Spleen (tissue), 13 donors: ENCODE measurements at regions of chr10 and their contacts with region 1.

Region 1: GRCh38 chr10:22316285-22317120 is at the start of gene COMMD3:
- DNase-seq: peak; percentile 96
- H3K4me3 ChIP-seq: peak within 1 kb of the TSS; percentile 74 to 95 (median 83)
- H3K27ac ChIP-seq: peak within 1 kb of the TSS; percentile 76 to 96 (median 94)
- H3K4me1 ChIP-seq: peaks cover 21 to 52% (median 42%) of the 10 kb centered on the region in 6 donors
- H3K27me3 ChIP-seq: peaks cover 0 to 5% (median 0%) of the 10 kb centered on the region in 7 donors
- CTCF ChIP-seq: peak in 1 of 11 experiments; percentile 4
- POLR2A ChIP-seq: peak in 2 of 3 donors; percentile 39 to 64
- total RNA-seq, gene COMMD3: 43.5 to 63.7 (median 52.9) TPM

Region 2: GRCh38 chr10:22251751-22252223 is 64.7 kb before region 1 on chr10:
- intact Hi-C with region 1: loop called (anchors 10 kb)
- DNase-seq: peak; percentile 92
- H3K4me3 ChIP-seq: peak overlapping the region; percentile 63 to 95 (median 72)
- H3K27ac ChIP-seq: peak overlapping the region; percentile 95 to 99 (median 98)
- H3K4me1 ChIP-seq: peaks cover 11 to 60% (median 28%) of the 10 kb centered on the region in 6 donors
- H3K27me3 ChIP-seq: peaks cover 0 to 14% (median 0%) of the 10 kb centered on the region in 7 donors
- CTCF ChIP-seq: no peak
- POLR2A ChIP-seq: no peak

Region 3: GRCh38 chr10:22410394-22410793 is 93.9 kb after region 1 on chr10:
- intact Hi-C with region 1: no loop called
- DNase-seq: no peak
- H3K4me3 ChIP-seq: no peak overlapping the region
- H3K27ac ChIP-seq: no peak overlapping the region
- H3K4me1 ChIP-seq: no peaks in the 10 kb centered on the region
- H3K27me3 ChIP-seq: no peaks in the 10 kb centered on the region
- CTCF ChIP-seq: no peak
- POLR2A ChIP-seq: no peak